ENCODE measurements at regions of chr1 and their contacts with region 1.

Region 1: GRCh38 chr1:99170516-99170915 is 93.8 kb upstream of the PLPPR4 start:
- DNase-seq: no peak
- ATAC-seq: no peak
- H3K4me3 ChIP-seq: no peak overlapping the region
- H3K4me1 ChIP-seq: no peaks in the 10 kb centered on the region
- CTCF ChIP-seq: no peak

Region 2: GRCh38 chr1:98794196-98794886 is 376.2 kb before region 1 on chr1:
- intact Hi-C with region 1: loop called in 1 of 2 experiments (anchors 10 kb)
- DNase-seq: peak in 1 of 3 donors; percentile 81
- ATAC-seq: peak; percentile 93
- H3K4me3 ChIP-seq: no peak overlapping the region
- H3K4me1 ChIP-seq: no peaks in the 10 kb centered on the region
- CTCF ChIP-seq: peak; percentile 49

Measured in mucosa of descending colon (tissue), 3 donors.